HepG2 (cell line): ENCODE measurements at regions of chr14 and their contacts with region 1.

Region 1: DNA sequence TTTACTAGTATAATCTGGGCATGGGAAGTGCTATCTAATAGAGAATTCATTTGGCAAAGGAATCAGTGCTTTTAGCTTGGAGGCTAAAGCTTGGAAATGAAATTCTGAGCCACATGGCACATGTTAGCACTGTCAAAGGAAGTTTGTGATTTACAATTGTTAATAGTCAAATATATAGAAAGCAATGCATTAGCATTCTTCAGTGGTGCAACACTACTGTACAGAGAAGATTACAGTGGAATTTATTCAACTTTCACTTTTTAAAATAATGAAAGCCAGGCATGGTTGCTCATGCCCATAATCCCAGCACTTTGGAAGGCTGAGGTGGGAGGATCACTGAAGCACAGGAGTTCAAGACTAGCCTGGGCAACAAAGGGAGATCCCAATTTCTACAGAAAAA is 45.9 kb downstream of the PAX9 start:
- DNase-seq: no peak
- ATAC-seq: no peak
- H3K4me3 ChIP-seq: no peak overlapping the region
- H3K27ac ChIP-seq: no peak overlapping the region
- H3K4me1 ChIP-seq: no peaks in the 10 kb centered on the region
- H3K27me3 ChIP-seq: no peaks in the 10 kb centered on the region
- CTCF ChIP-seq: no peak
- EP300 ChIP-seq: no peak
- POLR2A ChIP-seq: no peak
- RAD21 ChIP-seq: no peak

Region 2: GRCh38 chr14:36293824-36294223 is 413.7 kb before region 1 on chr14:
- CTCF ChIA-PET with region 1: no interaction called
- POLR2A ChIA-PET with region 1: no interaction called
- in situ Hi-C with region 1: no loop called
- intact Hi-C with region 1: no loop called
- DNase-seq: peak; percentile 30
- ATAC-seq: no peak; the same call in 2 of the 3 replicates
- H3K4me3 ChIP-seq: no peak overlapping the region
- H3K27ac ChIP-seq: no peak overlapping the region
- H3K4me1 ChIP-seq: no peaks in the 10 kb centered on the region
- H3K27me3 ChIP-seq: no peaks in the 10 kb centered on the region
- CTCF ChIP-seq: no peak
- EP300 ChIP-seq: no peak
- POLR2A ChIP-seq: no peak
- RAD21 ChIP-seq: no peak

Region 3: DNA sequence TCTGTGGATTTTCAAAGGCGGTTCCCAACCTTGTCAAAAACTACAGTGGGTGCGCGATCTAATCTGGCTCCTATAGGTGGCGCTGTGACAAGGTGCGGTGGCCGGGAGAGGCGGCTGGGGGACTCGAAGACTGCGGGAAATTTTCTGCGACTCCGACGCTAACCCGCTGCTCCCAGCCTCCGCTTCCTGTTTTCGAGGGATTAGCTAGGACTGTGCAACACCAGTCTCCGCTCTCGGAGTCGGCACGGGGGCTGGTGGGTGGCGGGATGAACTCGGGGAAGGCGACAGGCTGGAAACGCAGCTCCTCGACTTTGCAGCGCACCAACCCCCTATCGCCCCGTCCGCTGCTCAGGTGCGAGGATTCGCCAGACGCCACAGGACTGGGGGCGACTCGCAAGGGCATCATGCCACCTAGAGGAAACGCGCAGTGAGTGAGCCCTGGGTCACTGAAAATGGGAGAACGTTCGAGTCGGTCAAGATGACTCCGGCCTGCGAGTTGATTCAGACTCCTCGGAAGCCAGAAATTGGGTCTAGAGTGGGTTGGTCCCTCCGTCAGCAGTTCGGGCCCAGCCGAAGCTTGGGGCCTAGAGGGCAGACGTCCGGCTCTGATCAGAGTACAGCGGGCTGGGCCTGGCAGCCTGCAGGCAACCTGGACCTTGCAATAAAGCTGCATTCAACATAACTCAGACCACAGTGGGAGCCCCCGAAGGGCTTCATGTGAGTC is 51.4 kb before region 1 on chr14:
- CTCF ChIA-PET with region 1: no interaction called
- POLR2A ChIA-PET with region 1: no interaction called
- in situ Hi-C with region 1: no loop called
- intact Hi-C with region 1: loop called (anchors 2 kb)
- DNase-seq: peak; percentile 52
- ATAC-seq: peak; percentile 52
- H3K4me3 ChIP-seq: peak overlapping the region in 1 of 3 experiments; percentile 32; a peak in 1 of 6 replicates
- H3K27ac ChIP-seq: no peak overlapping the region
- H3K4me1 ChIP-seq: peaks cover 23% of the 10 kb centered on the region
- H3K27me3 ChIP-seq: peaks cover 46 to 74% of the 10 kb centered on the region in 2 experiments
- CTCF ChIP-seq: peak; percentile 66
- EP300 ChIP-seq: no peak
- POLR2A ChIP-seq: no peak
- RAD21 ChIP-seq: peak; percentile 8; the same call in 1 of the 2 replicates

Region 4: GRCh38 chr14:36718216-36718615 is 10.6 kb after region 1 on chr14:
- CTCF ChIA-PET with region 1: no interaction called
- POLR2A ChIA-PET with region 1: no interaction called
- in situ Hi-C with region 1: no loop called
- intact Hi-C with region 1: no loop called
- DNase-seq: peak; percentile 52
- ATAC-seq: peak; percentile 79
- H3K4me3 ChIP-seq: no peak overlapping the region
- H3K27ac ChIP-seq: no peak overlapping the region
- H3K4me1 ChIP-seq: peaks cover 10% of the 10 kb centered on the region; the same call in 1 of the 2 replicates
- H3K27me3 ChIP-seq: no peaks in the 10 kb centered on the region
- CTCF ChIP-seq: no peak
- EP300 ChIP-seq: no peak
- POLR2A ChIP-seq: no peak
- RAD21 ChIP-seq: no peak

Region 5: DNA sequence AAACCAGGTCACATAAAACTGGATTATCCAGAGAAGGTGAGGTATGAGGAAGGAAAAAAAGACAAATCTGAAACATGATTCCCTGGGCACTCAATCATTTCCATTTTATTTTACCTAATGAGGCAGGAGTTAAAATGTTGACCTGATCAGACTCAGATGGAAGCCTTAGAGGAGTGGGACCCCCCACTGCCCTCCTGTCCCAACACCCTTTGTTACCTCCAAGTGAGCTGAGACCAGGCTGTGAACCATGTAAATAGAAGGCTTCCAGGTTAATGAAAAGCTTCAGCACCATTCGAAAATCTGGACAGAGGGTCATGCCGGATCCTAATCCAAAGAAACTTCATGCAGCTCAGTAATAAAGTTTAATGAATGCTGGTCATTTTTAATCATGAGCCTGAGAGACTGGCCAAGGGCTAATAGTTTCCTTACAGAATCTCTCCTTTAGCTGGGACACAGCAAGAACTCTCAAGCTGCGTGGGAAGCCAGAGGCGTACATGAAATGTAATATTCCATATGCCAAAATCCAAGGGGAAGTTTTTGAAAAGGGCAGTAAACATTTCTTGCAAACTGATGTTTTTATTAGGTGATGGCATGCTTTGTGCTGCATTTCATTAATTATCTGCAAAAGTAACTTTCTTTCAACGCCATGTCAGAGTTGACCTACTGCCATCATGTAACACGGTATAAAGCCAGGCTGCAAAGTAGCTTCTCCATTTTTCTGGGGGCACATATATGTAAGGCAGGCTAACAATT is 137.0 kb after region 1 on chr14:
- CTCF ChIA-PET with region 1: no interaction called
- POLR2A ChIA-PET with region 1: no interaction called
- in situ Hi-C with region 1: no loop called
- intact Hi-C with region 1: no loop called
- DNase-seq: no peak
- ATAC-seq: no peak
- H3K4me3 ChIP-seq: no peak overlapping the region
- H3K27ac ChIP-seq: no peak overlapping the region
- H3K4me1 ChIP-seq: no peaks in the 10 kb centered on the region
- H3K27me3 ChIP-seq: no peaks in the 10 kb centered on the region
- CTCF ChIP-seq: no peak
- EP300 ChIP-seq: no peak
- POLR2A ChIP-seq: no peak
- RAD21 ChIP-seq: no peak